H1 (cell line): ENCODE measurements at regions of chr11 and their contacts with region 1.

Region 1: DNA sequence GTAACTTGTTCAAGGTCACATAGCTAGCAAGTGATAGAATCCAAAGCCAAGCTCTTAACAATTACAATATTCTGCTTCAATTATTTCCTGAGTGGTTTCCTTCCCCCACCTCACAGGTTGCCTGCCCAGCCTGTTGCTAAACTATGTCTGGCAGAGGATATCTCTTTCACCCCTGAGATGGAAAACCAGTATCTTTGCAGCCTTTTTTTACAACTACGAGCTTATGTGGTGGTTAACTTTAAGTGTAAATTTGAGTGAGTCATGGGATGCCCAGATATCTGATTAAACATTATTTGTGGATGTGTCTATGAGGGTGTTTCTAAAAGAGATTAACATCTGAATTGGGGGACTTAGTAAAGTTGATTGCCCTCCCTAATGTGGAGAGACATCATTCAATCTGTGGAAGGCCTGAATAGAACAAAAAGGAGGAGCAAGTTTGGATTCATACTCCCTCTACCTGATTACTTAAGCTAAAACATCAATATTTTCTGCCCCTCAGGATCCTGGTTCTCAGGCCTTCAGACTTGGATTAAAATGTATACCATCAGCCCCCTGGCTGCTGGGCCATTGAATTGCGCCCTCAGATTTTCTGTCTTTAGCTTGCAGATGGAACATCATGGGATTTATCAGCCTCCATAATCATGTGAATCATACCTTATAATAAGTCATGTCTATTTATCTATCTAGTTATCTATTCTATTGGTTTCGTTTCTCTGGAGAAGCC is 911.9 kb downstream of the METTL15 start:
- DNase-seq: peak in 1 of 2 experiments; percentile 45
- H3K4me3 ChIP-seq: no peak overlapping the region
- H3K27ac ChIP-seq: no peak overlapping the region
- H3K4me1 ChIP-seq: no peaks in the 10 kb centered on the region; a peak in 1 of 7 replicates
- H3K27me3 ChIP-seq: no peaks in the 10 kb centered on the region
- CTCF ChIP-seq: peak; percentile 27 to 61 (median 53)
- EP300 ChIP-seq: no peak
- POLR2A ChIP-seq: no peak
- RAD21 ChIP-seq: peak; percentile 59 to 65

Region 2: GRCh38 chr11:28679795-28680468 is 340.2 kb before region 1 on chr11:
- CTCF ChIA-PET with region 1: interaction called, 13 read pairs
- POLR2A ChIA-PET with region 1: no interaction called
- DNase-seq: no peak
- H3K4me3 ChIP-seq: no peak overlapping the region
- H3K27ac ChIP-seq: no peak overlapping the region
- H3K4me1 ChIP-seq: no peaks in the 10 kb centered on the region
- H3K27me3 ChIP-seq: no peaks in the 10 kb centered on the region
- CTCF ChIP-seq: no peak
- EP300 ChIP-seq: no peak
- POLR2A ChIP-seq: no peak
- RAD21 ChIP-seq: no peak

Region 3: GRCh38 chr11:29005401-29005980 is 14.6 kb before region 1 on chr11:
- CTCF ChIA-PET with region 1: interaction called, 24 read pairs
- POLR2A ChIA-PET with region 1: no interaction called
- DNase-seq: no peak
- H3K4me3 ChIP-seq: no peak overlapping the region
- H3K27ac ChIP-seq: no peak overlapping the region
- H3K4me1 ChIP-seq: no peaks in the 10 kb centered on the region
- H3K27me3 ChIP-seq: no peaks in the 10 kb centered on the region
- CTCF ChIP-seq: peak in 1 of 3 experiments; percentile 23; a peak in 1 of 4 replicates
- EP300 ChIP-seq: no peak
- POLR2A ChIP-seq: no peak
- RAD21 ChIP-seq: peak; percentile 35 to 43

Region 4: GRCh38 chr11:29040491-29040890 is 20.4 kb after region 1 on chr11:
- CTCF ChIA-PET with region 1: interaction called, 13 read pairs
- POLR2A ChIA-PET with region 1: no interaction called
- DNase-seq: no peak
- H3K4me3 ChIP-seq: no peak overlapping the region
- H3K27ac ChIP-seq: no peak overlapping the region
- H3K4me1 ChIP-seq: no peaks in the 10 kb centered on the region
- H3K27me3 ChIP-seq: no peaks in the 10 kb centered on the region
- CTCF ChIP-seq: no peak
- EP300 ChIP-seq: no peak
- POLR2A ChIP-seq: no peak
- RAD21 ChIP-seq: no peak